ENCODE measurements at regions of chr20 and their contacts with region 1.

Region 1: DNA sequence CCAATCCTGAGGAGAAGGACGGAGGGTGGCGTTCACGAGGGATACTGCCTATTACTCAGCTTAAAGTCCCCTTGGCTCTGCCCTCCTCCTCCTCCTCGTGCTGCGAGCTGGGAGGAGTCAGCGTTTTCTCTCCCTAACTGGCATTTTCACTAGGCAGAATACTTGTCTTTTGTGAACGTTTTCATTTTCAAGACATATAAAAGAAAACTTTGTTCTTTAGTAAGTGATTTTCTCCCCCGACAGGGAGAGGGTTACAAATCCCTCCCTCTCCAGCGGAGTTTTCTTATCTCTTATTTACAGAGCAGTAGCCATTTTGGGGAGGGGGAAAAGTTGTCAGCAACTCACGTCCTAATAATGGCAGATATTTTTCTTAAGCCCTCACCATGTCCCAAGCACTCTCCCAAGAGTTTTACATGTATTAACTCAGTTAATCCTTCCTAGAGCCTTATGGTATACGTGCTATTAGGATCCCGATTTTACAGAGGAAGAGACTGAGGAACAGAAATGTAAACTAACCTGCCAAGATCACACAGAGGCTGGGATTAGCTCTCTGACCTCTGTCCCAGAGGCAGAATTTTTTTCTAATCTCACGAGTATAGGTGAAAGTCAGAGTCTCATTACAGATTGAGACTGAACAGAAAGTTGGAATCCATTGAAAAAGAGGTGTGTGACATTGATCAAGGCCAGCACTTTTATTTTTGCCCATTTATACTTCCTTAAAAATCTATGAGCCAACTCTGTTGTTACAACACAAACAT is 30.0 kb upstream of the ZNF217 start:
- DNase-seq: peak; percentile 64 to 79 (median 74)
- H3K4me3 ChIP-seq: peak overlapping the region; percentile 25
- H3K27ac ChIP-seq: peak overlapping the region; percentile 82 to 90
- H3K4me1 ChIP-seq: peaks cover 9% of the 10 kb centered on the region
- H3K27me3 ChIP-seq: no peaks in the 10 kb centered on the region
- CTCF ChIP-seq: no peak
- EP300 ChIP-seq: no peak
- POLR2A ChIP-seq: peak; percentile 33

Region 2: GRCh38 chr20:53592992-53593465 is 30.6 kb before region 1 on chr20:
- intact Hi-C with region 1: loop called in 1 of 4 experiments (anchors 2 kb)
- DNase-seq: peak; percentile 53 to 74 (median 72)
- H3K4me3 ChIP-seq: peak overlapping the region; percentile 85
- H3K27ac ChIP-seq: peak overlapping the region; percentile 95 to 97
- H3K4me1 ChIP-seq: peaks cover 2% of the 10 kb centered on the region
- H3K27me3 ChIP-seq: no peaks in the 10 kb centered on the region
- CTCF ChIP-seq: no peak
- EP300 ChIP-seq: no peak
- POLR2A ChIP-seq: no peak